Pancreas (tissue), 10 donors: ENCODE measurements at regions of chr17 and their contacts with region 1.

Region 1: GRCh38 chr17:80389011-80389995 is 25.7 kb upstream of the ENDOV start:
- DNase-seq: no peak
- ATAC-seq: no peak
- H3K4me3 ChIP-seq: no peak overlapping the region
- H3K27ac ChIP-seq: no peak overlapping the region
- H3K4me1 ChIP-seq: no peaks in the 10 kb centered on the region
- H3K27me3 ChIP-seq: no peaks in the 10 kb centered on the region
- CTCF ChIP-seq: no peak

Region 2: GRCh38 chr17:80327518-80327917 is 61.8 kb before region 1 on chr17:
- intact Hi-C with region 1: loop called in 1 of 3 experiments (anchors 10 kb)
- DNase-seq: peak in 1 of 6 donors; percentile 0
- ATAC-seq: peak in 1 of 4 donors; percentile 49
- H3K4me3 ChIP-seq: no peak overlapping the region
- H3K27ac ChIP-seq: no peak overlapping the region
- H3K4me1 ChIP-seq: no peaks in the 10 kb centered on the region
- H3K27me3 ChIP-seq: no peaks in the 10 kb centered on the region
- CTCF ChIP-seq: no peak